IMR-90 (cell line): ENCODE measurements at regions of chr3 and their contacts with region 1.

Region 1: DNA sequence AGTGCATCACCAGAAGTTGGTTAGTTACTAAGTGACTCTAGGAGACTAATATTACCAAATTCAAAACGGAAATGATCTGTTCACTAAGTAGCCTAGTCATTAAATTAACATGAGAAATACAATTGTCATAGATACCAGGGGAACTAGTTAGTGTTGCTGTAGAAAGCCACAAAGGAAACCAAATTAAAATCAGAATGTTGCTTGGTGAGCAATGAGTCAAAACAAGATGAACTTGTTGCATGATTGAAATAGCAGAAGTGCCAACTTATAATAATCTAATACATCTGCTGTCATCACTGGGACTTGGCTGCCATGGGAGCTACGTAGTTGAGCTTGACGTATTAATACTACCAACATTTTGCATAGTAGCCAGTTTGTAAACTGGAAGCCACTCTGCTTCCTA is 458.1 kb downstream of the DIPK2A start:
- DNase-seq: no peak
- ATAC-seq: no peak
- H3K4me3 ChIP-seq: no peak overlapping the region
- H3K27ac ChIP-seq: no peak overlapping the region
- H3K4me1 ChIP-seq: no peaks in the 10 kb centered on the region
- H3K27me3 ChIP-seq: no peaks in the 10 kb centered on the region
- CTCF ChIP-seq: no peak
- POLR2A ChIP-seq: no peak
- RAD21 ChIP-seq: no peak

Region 2: GRCh38 chr3:144549161-144549560 is 119.4 kb after region 1 on chr3:
- CTCF ChIA-PET with region 1: no interaction called
- POLR2A ChIA-PET with region 1: no interaction called
- dilution Hi-C with region 1: no loop called
- in situ Hi-C with region 1: loop called (anchors 25 kb)
- intact Hi-C with region 1: no loop called
- DNase-seq: no peak
- ATAC-seq: no peak
- H3K4me3 ChIP-seq: no peak overlapping the region
- H3K27ac ChIP-seq: no peak overlapping the region
- H3K4me1 ChIP-seq: no peaks in the 10 kb centered on the region
- H3K27me3 ChIP-seq: no peaks in the 10 kb centered on the region
- CTCF ChIP-seq: no peak
- POLR2A ChIP-seq: no peak
- RAD21 ChIP-seq: no peak